ENCODE measurements at regions of chr1 and their contacts with region 1.

Region 1: DNA sequence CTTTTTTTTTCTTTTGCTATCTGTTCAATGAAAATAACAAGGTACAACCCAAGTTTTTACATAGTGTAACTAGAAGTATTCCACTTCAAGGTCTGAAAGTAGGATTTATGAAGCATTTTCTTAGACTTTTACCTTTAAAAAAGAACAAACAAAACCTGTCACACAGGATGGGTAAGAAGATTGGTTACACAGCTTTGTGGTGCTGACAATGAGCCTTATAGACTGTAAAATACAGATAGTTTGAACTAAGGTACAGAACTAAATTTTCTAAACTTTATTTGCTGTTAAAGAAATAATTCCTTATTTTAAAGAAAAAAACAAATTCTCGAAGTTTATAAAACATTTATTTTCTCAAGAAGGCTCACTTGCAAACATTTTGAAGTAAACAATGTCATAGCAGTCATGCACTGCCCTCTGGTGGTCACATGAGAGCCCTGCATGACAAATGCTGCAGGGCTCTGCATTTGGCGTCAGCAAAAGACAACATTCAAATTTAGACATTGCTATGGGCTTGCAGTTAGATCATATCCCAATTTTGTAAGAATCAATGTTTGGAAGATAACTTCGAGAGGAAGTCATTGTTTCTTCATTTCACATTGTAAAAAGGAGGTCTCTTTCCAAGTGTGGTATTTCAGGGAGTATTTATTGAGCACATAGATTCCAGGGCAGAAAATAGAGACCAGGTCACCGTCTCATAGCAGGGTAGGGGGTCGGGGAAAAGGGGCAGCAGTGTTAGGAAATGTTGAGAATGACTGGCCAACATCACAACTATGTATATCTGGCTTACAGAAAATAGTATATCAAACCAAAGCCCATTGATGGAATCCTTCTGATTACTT is 115.3 kb upstream of the FMN2 start:
- DNase-seq: peak in 13 of 14 experiments; percentile 12 to 63 (median 27)
- ATAC-seq: peak; percentile 39
- H3K4me3 ChIP-seq: no peak overlapping the region
- H3K4me3 Mint-ChIP-seq: no peak overlapping the region
- H3K27ac ChIP-seq: no peak overlapping the region
- H3K27ac Mint-ChIP-seq: no peak overlapping the region
- H3K4me1 ChIP-seq: no peaks in the 10 kb centered on the region
- H3K4me1 Mint-ChIP-seq: no peaks in the 10 kb centered on the region
- H3K27me3 ChIP-seq: no peaks in the 10 kb centered on the region
- H3K27me3 Mint-ChIP-seq: peaks cover 23% of the 10 kb centered on the region
- CTCF ChIP-seq: peak; percentile 98

Region 2: GRCh38 chr1:238252033-238252802 is 1724.1 kb before region 1 on chr1:
- CTCF ChIA-PET with region 1: no interaction called
- POLR2A ChIA-PET with region 1: no interaction called
- intact Hi-C with region 1: loop called (anchors 5 kb)
- DNase-seq: peak in 4 of 14 experiments; percentile 4 to 14 (median 10)
- ATAC-seq: no peak
- H3K4me3 ChIP-seq: no peak overlapping the region
- H3K4me3 Mint-ChIP-seq: no peak overlapping the region
- H3K27ac ChIP-seq: no peak overlapping the region
- H3K27ac Mint-ChIP-seq: no peak overlapping the region
- H3K4me1 ChIP-seq: no peaks in the 10 kb centered on the region
- H3K4me1 Mint-ChIP-seq: no peaks in the 10 kb centered on the region
- H3K27me3 ChIP-seq: no peaks in the 10 kb centered on the region
- H3K27me3 Mint-ChIP-seq: no peaks in the 10 kb centered on the region
- CTCF ChIP-seq: no peak

Region 3: GRCh38 chr1:239893127-239893731 is 83.1 kb before region 1 on chr1:
- CTCF ChIA-PET with region 1: no interaction called
- POLR2A ChIA-PET with region 1: no interaction called
- intact Hi-C with region 1: no loop called
- DNase-seq: no peak
- ATAC-seq: no peak
- H3K4me3 ChIP-seq: no peak overlapping the region
- H3K4me3 Mint-ChIP-seq: no peak overlapping the region
- H3K27ac ChIP-seq: no peak overlapping the region
- H3K27ac Mint-ChIP-seq: no peak overlapping the region
- H3K4me1 ChIP-seq: peaks cover 4% of the 10 kb centered on the region
- H3K4me1 Mint-ChIP-seq: peaks cover 6% of the 10 kb centered on the region
- H3K27me3 ChIP-seq: no peaks in the 10 kb centered on the region
- H3K27me3 Mint-ChIP-seq: peaks cover 4% of the 10 kb centered on the region
- CTCF ChIP-seq: no peak

Region 4: GRCh38 chr1:239909898-239910297 is 66.5 kb before region 1 on chr1:
- CTCF ChIA-PET with region 1: no interaction called
- POLR2A ChIA-PET with region 1: no interaction called
- intact Hi-C with region 1: no loop called
- DNase-seq: peak in 2 of 14 experiments; percentile 48 to 52
- ATAC-seq: no peak
- H3K4me3 ChIP-seq: no peak overlapping the region
- H3K4me3 Mint-ChIP-seq: no peak overlapping the region
- H3K27ac ChIP-seq: no peak overlapping the region
- H3K27ac Mint-ChIP-seq: no peak overlapping the region
- H3K4me1 ChIP-seq: no peaks in the 10 kb centered on the region
- H3K4me1 Mint-ChIP-seq: no peaks in the 10 kb centered on the region
- H3K27me3 ChIP-seq: no peaks in the 10 kb centered on the region
- H3K27me3 Mint-ChIP-seq: no peaks in the 10 kb centered on the region
- CTCF ChIP-seq: no peak

Region 5: DNA sequence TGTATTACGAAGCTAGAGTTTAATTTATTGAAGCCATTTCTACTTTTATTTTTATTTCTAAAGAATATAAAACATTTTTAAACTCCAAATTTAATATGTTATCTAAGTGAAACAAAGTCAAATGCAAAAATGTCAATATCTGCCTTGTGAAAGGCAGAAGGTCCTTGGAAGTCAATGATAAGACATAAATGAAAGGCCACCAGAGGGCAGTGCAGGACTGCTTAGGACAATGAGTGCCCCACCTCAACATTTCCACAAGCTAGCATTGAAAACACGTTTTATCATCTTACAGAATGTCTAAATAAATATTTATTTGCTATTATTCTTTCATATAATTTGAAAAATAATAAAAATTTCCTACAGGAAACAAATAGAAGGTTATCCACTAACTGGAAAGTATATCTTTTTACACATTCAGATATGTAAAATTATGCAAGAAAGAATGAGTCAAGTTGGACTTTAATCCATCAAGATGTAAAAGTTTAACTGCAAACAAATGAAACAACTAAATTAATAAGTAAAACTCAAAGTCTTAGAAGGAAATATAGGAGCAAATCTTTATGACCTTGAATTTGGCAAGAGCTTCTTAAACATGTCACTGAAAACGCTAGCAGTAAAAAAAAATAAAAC is 24.7 kb before region 1 on chr1:
- CTCF ChIA-PET with region 1: interaction called, 3 read pairs
- POLR2A ChIA-PET with region 1: no interaction called
- intact Hi-C with region 1: loop called (anchors 1 to 2 kb)
- DNase-seq: peak in 13 of 14 experiments; percentile 5 to 64 (median 18)
- ATAC-seq: peak; percentile 39
- H3K4me3 ChIP-seq: no peak overlapping the region
- H3K4me3 Mint-ChIP-seq: no peak overlapping the region
- H3K27ac ChIP-seq: no peak overlapping the region
- H3K27ac Mint-ChIP-seq: no peak overlapping the region
- H3K4me1 ChIP-seq: no peaks in the 10 kb centered on the region
- H3K4me1 Mint-ChIP-seq: no peaks in the 10 kb centered on the region
- H3K27me3 ChIP-seq: no peaks in the 10 kb centered on the region
- H3K27me3 Mint-ChIP-seq: peaks cover 5% of the 10 kb centered on the region
- CTCF ChIP-seq: peak; percentile 72

Measured in CD4-positive, alpha-beta T cell (primary cell).